AG04449 (cell line): ENCODE measurements at regions of chr2 and their contacts with region 1.

Region 1: GRCh38 chr2:223113161-223113560 is 61.2 kb downstream of the KCNE4 start:
- DNase-seq: no peak
- H3K4me3 ChIP-seq: no peak overlapping the region
- CTCF ChIP-seq: no peak

Region 2: GRCh38 chr2:223101340-223102039 is 11.7 kb before region 1 on chr2:
- CTCF ChIA-PET with region 1: interaction called, 38 read pairs
- POLR2A ChIA-PET with region 1: no interaction called
- DNase-seq: no peak
- H3K4me3 ChIP-seq: no peak overlapping the region
- CTCF ChIP-seq: peak; percentile 56